AG04450 (cell line): ENCODE measurements at regions of chr3 and their contacts with region 1.

Region 1: DNA sequence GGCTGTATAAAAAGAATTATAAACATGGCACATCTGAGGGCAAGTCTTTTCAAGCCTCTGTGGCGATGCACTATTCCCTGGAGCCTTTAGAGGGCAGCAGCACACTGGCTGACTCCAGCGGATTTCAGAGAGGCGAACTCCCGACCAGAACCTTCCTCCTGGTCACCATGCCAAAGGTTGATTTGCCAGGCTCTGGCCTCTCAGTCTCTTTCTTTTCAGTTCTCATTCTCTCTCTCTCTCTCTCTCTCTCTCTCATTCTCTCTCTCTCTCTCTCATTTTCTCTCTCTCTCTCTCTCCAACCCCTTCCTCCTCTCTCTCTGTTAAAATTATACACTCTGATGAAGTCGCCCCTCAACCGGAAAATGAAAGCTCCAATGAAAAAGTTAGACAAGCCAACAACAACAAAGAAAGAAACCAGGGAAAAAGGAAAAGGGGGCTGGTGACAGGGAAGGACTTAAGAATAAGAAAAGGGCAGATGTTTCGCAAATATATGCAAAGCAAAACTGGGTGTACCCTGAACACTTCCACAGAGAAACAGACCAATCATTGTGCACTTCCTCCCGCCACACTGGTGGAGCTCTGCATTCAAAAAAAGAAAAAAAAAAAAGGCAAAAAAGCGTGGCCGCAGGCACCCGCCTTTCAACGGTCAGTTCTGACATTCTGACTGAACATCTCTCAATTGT is 90.2 kb downstream of the TIGIT start:
- DNase-seq: peak; percentile 69
- H3K4me3 ChIP-seq: peak overlapping the region; percentile 45
- H3K27ac ChIP-seq: peak overlapping the region; percentile 53
- H3K27me3 ChIP-seq: no peaks in the 10 kb centered on the region
- CTCF ChIP-seq: peak; percentile 98

Region 2: GRCh38 chr3:114362815-114363214 is 21.2 kb before region 1 on chr3:
- CTCF ChIA-PET with region 1: interaction called, 10 read pairs
- POLR2A ChIA-PET with region 1: interaction called, 5 read pairs
- DNase-seq: no peak
- H3K4me3 ChIP-seq: no peak overlapping the region
- H3K27ac ChIP-seq: no peak overlapping the region
- H3K27me3 ChIP-seq: no peaks in the 10 kb centered on the region
- CTCF ChIP-seq: peak; percentile 51

Region 3: GRCh38 chr3:114411811-114412803 is 28.1 kb after region 1 on chr3:
- CTCF ChIA-PET with region 1: interaction called, 23 read pairs
- POLR2A ChIA-PET with region 1: no interaction called
- DNase-seq: no peak
- H3K4me3 ChIP-seq: no peak overlapping the region
- H3K27ac ChIP-seq: peak overlapping the region; percentile 54
- H3K27me3 ChIP-seq: no peaks in the 10 kb centered on the region
- CTCF ChIP-seq: no peak; the same call in 1 of the 2 replicates

Region 4: DNA sequence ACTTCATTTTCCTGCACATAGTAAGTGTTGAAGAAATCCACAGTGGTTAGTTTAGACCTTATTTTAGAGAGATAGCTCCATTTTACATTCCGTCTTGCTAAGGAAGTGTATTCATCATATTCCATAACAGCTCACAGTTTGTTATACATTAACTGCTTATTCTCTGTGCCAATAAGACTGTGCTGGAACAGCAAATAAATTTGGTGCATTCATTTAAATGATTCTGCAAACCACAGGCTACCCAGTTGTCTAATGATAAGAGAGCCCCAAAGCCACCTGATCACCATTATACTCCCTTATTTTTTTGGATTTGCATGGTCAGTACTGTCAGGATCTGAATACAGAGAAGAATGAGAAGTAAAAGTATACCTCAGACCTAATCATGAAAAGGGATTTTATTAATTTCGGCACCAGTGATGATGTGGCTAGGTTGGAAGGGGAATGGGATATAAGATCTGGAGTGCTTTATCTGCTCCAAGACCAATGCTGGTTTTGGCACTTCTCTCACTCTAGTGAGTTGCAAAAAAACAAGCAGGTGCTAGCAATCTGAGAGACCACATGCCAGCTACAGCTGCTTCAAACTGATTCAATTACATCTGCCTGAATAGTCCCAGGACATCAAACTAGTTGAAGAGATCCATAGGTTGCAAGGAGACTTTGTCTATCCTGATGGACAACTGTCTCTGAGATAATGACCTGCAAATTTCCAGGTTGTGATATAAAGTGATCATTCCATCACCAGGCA is 508.3 kb after region 1 on chr3:
- CTCF ChIA-PET with region 1: interaction called, 10 read pairs
- POLR2A ChIA-PET with region 1: no interaction called
- DNase-seq: no peak
- H3K4me3 ChIP-seq: no peak overlapping the region
- H3K27ac ChIP-seq: no peak overlapping the region
- H3K27me3 ChIP-seq: no peaks in the 10 kb centered on the region
- CTCF ChIP-seq: no peak